PC-9 (cell line): ENCODE measurements at regions of chr3 and their contacts with region 1.

Region 1: DNA sequence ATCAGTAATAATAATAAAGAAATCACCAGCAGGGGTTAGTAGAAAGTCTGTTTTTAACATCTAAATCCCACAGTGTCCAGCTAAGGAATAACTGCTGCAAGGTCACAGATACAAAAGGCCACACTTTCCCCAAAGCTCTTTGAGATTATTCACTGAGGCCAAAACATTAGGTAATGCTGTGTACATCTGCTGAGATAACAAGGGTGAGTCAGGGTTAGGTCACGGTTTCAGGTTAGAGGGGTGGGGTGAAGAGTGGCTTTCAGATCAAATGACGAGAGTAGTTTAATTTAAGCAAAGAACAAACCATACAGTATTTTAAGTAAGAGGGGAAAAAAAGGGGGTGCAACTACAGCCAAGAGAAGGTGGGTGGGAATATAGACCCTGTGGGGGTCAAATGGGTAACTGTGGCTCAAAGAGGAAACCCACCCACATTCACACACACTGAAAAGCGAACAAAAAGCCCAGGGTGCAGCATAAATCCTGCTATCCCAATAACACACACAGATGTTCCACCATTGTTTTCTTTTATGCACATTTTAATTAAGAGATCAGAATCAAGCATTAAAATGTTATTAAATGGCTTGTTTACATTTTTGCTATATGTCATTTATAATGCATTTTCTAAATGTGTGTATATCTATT is 412.9 kb downstream of the TIGIT start:
- DNase-seq: peak; percentile 58 to 84
- H3K4me3 ChIP-seq: no peak overlapping the region
- H3K27ac ChIP-seq: peak overlapping the region; percentile 56
- H3K4me1 ChIP-seq: peaks cover 39% of the 10 kb centered on the region
- H3K27me3 ChIP-seq: no peaks in the 10 kb centered on the region
- CTCF ChIP-seq: no peak

Region 2: DNA sequence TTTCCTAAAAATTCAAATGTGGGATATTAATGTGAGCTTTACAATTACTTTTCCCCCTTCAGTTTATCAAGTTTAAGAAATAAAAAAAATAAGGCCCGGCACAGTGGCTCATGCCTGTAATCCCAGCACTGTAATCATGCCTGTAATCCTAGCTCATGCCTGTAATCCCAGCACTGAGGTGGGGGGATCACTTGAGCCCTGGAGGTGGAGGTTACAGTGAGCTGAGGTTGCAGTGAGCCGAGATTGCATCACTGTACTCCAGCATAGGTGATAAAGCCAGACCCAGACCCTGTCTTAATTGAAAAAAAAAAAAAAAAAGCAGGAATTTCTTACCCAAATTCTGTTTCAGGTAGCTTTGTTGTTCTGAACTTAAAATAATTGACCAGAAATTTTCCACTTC is 942.0 kb before region 1 on chr3:
- CTCF ChIA-PET with region 1: no interaction called
- POLR2A ChIA-PET with region 1: interaction called, 12 read pairs
- intact Hi-C with region 1: no loop called
- DNase-seq: no peak
- H3K4me3 ChIP-seq: no peak overlapping the region
- H3K27ac ChIP-seq: no peak overlapping the region
- H3K4me1 ChIP-seq: peaks cover 10% of the 10 kb centered on the region
- H3K27me3 ChIP-seq: no peaks in the 10 kb centered on the region
- CTCF ChIP-seq: no peak

Region 3: DNA sequence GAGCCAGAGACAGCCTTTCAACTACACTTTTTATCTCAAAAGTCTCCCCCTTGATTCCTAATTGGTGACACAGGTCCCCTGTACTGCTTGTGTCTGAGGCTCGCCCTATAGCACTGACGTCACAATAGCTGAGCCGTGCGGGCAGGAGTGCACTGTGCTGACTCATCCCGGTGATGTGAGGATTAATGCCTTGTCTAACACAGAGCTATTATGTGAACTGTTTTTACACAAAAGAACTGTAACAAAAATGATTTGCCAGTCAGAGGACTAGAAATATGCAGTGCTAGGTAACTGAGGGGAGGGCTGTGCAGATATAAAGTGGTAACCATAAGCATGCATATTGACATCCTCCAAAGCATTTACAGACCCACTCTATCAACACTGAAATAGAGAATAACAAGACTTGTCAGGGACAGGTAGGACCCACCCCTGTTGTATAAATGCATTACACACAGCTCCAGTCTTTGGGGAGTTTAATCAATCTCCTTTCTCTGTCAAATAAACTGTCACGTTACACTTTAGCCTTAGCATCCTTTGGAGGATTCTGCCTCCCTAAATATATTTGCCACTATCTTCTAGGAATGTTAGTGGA is 207.8 kb before region 1 on chr3:
- CTCF ChIA-PET with region 1: no interaction called
- POLR2A ChIA-PET with region 1: no interaction called
- intact Hi-C with region 1: loop called (anchors 5 kb)
- DNase-seq: peak; percentile 84 to 85
- H3K4me3 ChIP-seq: 0 out of 2 replicates have a peak overlapping the region, but pooled peaks have one; percentile 18
- H3K27ac ChIP-seq: peak overlapping the region; percentile 63
- H3K4me1 ChIP-seq: peaks cover 52% of the 10 kb centered on the region
- H3K27me3 ChIP-seq: no peaks in the 10 kb centered on the region
- CTCF ChIP-seq: no peak

Region 4: GRCh38 chr3:114551770-114552526 is 154.8 kb before region 1 on chr3:
- CTCF ChIA-PET with region 1: no interaction called
- POLR2A ChIA-PET with region 1: no interaction called
- intact Hi-C with region 1: loop called (anchors 1 kb)
- DNase-seq: peak; percentile 68 to 75
- H3K4me3 ChIP-seq: 0 out of 2 replicates have a peak overlapping the region, but pooled peaks have one; percentile 10
- H3K27ac ChIP-seq: peak overlapping the region; percentile 75
- H3K4me1 ChIP-seq: peaks cover 13% of the 10 kb centered on the region
- H3K27me3 ChIP-seq: no peaks in the 10 kb centered on the region
- CTCF ChIP-seq: no peak

Region 5: GRCh38 chr3:114686621-114687020 is 20.1 kb before region 1 on chr3:
- CTCF ChIA-PET with region 1: no interaction called
- POLR2A ChIA-PET with region 1: no interaction called
- intact Hi-C with region 1: no loop called
- DNase-seq: no peak
- H3K4me3 ChIP-seq: no peak overlapping the region
- H3K27ac ChIP-seq: no peak overlapping the region
- H3K4me1 ChIP-seq: no peaks in the 10 kb centered on the region
- H3K27me3 ChIP-seq: no peaks in the 10 kb centered on the region
- CTCF ChIP-seq: no peak

Region 6: DNA sequence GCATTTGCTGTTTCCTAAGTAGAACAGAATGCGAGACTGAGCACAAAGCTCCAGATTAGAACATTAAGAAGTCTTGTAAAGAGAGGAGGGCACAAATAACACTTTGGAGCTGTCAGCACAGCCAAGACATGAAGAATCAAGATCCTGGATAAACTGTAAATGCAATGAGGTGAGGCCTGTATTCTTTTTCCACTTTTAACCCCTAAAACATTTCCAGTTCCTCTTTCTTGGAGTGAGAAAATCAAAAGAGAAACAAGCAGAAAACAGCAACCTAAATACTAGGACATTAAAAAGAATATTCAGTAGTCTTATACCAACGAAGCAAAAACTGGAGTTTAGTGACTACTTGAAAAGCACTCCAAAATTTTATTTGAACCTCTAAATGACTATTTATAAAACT is 236.1 kb after region 1 on chr3:
- CTCF ChIA-PET with region 1: no interaction called
- POLR2A ChIA-PET with region 1: no interaction called
- intact Hi-C with region 1: no loop called
- DNase-seq: no peak
- H3K4me3 ChIP-seq: no peak overlapping the region
- H3K27ac ChIP-seq: no peak overlapping the region
- H3K4me1 ChIP-seq: no peaks in the 10 kb centered on the region
- H3K27me3 ChIP-seq: no peaks in the 10 kb centered on the region
- CTCF ChIP-seq: no peak